Calu3 (cell line): ENCODE measurements at regions of chr2 and their contacts with region 1.

Region 1: DNA sequence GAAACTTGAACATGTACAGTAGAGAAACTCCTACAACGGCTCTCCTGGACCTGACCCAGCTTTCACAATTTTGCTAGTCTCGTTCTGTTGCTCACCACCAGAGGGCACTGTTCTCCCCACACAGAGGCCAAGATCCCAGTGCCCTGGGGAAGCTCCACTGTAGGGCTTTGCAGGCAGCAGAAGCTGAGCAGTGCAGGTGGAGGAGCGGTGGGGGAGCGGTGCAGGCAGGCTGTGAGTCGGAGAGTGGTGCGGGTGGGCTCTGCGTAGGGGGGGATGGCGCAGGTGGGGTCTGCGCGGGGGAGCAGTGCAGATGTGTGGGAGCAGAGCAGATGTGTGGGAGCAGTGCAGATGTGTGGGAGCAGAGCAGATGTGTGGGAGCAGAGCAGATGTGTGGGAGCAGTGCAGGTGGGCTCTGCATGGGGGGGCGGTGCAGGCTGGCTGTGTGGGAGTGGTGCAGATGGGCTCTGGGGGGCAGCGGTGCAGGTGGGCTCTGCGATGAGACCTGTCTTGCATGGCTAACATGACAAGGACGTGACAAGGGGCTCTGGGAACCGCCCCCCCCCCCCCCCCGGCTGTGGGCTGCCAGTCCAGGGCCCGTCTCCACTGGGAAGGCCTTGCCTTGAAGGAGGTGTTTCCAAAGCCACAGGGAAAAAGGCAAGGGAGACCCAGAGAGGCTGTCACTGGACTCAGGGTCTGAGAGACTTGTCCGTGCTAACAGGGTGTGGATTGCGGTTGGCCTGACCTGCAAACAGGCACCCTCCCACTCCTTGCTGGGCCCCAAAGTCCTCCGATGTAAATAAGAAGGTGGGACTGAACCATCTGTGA is 7.3 kb downstream of the CYS1 start:
- DNase-seq: peak; percentile 86
- H3K4me3 Mint-ChIP-seq: no peak overlapping the region
- H3K27ac Mint-ChIP-seq: no peak overlapping the region
- H3K4me1 Mint-ChIP-seq: peaks cover 10% of the 10 kb centered on the region
- H3K27me3 Mint-ChIP-seq: peaks cover 58% of the 10 kb centered on the region
- CTCF ChIP-seq: peak; percentile 77

Region 2: GRCh38 chr2:9820020-9820419 is 252.8 kb before region 1 on chr2:
- CTCF ChIA-PET with region 1: no interaction called
- intact Hi-C with region 1: no loop called
- DNase-seq: peak; percentile 50
- H3K4me3 Mint-ChIP-seq: peak overlapping the region; percentile 54
- H3K27ac Mint-ChIP-seq: peak overlapping the region; percentile 80
- H3K4me1 Mint-ChIP-seq: peaks cover 23% of the 10 kb centered on the region
- H3K27me3 Mint-ChIP-seq: no peaks in the 10 kb centered on the region
- CTCF ChIP-seq: no peak

Region 3: DNA sequence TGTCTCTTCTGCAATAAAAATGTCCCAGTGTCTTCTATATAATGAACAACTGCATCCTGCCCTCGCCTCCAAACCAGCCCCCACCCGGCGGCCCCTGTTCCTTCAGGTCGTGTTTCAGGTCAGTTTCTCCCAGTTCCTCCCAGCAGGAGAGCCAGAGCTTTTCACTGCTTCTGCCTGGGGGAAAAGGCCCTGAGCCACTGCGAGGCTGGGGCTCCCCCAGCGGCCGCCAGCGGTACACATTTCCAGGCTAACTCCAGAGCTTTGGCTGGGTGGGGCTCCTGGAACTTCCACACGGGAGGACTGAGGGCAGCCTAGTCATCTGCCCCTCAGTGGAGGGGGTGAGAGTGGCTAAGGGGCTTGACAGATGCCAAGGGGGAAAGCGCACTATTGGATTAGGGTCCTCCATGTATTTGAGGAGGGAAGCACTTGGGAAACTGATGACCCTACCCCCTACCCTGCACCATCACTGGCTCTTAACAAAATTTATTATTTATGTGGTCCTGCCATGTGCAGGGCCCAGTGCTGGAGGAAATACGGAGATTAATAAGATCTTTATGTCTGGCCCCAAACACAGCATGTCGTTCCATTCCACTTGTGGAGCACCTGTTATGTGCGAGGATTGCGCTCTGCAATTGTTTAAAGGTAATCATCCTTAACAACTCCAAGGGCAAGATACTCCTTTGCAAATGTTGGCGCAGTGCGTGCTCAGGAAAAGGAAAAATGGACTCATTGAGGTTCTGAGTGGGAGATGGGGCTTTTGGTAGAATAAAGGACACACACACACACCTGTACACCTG is 24.7 kb after region 1 on chr2:
- CTCF ChIA-PET with region 1: interaction called, 124 read pairs
- intact Hi-C with region 1: loop called (anchors 1 kb)
- DNase-seq: peak; percentile 80
- H3K4me3 Mint-ChIP-seq: no peak overlapping the region
- H3K27ac Mint-ChIP-seq: no peak overlapping the region
- H3K4me1 Mint-ChIP-seq: peaks cover 11% of the 10 kb centered on the region
- H3K27me3 Mint-ChIP-seq: no peaks in the 10 kb centered on the region
- CTCF ChIP-seq: peak; percentile 85

Region 4: DNA sequence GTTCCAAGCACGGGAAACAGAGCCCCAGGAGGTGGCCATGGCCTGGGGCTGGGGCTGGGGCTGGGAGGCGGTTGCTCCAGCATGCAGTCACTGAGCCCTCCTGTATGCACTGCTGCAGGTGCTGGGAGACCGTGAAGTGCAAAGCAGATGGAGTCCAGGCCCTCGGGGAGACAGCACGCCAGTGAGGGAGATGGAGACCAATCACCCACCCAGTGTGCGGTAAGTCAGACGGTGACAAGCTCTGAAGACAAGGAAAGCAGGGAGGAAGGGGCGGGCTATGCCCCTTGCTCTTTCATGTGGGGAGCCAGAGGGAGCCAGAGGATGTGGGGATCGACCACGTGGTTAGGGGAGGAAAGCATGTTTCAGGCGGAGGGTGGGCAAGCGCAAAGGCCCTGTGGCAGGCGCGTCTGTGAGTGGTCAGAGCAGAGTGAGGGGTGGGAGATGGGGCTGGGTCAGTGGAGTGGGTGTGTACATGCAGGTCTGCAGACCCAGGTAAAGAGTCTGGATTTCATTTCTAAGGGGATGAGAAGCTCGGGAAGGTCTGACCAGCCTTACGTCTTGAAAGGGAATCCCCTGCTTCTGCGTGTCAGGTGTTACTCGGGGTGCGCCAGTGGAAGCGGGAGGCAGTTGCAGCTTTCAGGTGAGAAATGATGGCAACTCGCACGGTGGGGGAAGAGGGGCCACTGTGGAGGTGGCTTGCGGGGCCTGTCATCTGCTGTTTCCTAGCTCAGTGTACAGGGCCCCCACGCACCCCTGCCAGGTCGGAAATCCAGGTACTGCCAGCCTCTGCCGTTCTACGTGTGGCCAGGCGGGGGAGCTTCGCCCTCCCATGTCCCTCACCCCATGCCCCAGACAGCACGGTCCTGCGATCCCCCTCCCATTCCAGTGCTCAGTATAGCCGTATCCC is 69.1 kb after region 1 on chr2:
- CTCF ChIA-PET with region 1: interaction called, 10 read pairs
- intact Hi-C with region 1: no loop called
- DNase-seq: peak; percentile 47
- H3K4me3 Mint-ChIP-seq: no peak overlapping the region
- H3K27ac Mint-ChIP-seq: peak overlapping the region; percentile 73
- H3K4me1 Mint-ChIP-seq: peaks cover 9% of the 10 kb centered on the region
- H3K27me3 Mint-ChIP-seq: no peaks in the 10 kb centered on the region
- CTCF ChIP-seq: peak; percentile 55

Region 5: GRCh38 chr2:10434886-10435819 is 362.3 kb after region 1 on chr2:
- CTCF ChIA-PET with region 1: interaction called, 44 read pairs
- intact Hi-C with region 1: loop called (anchors 2 kb)
- DNase-seq: peak; percentile 86
- H3K4me3 Mint-ChIP-seq: no peak overlapping the region
- H3K27ac Mint-ChIP-seq: no peak overlapping the region
- H3K4me1 Mint-ChIP-seq: peaks cover 18% of the 10 kb centered on the region
- H3K27me3 Mint-ChIP-seq: no peaks in the 10 kb centered on the region
- CTCF ChIP-seq: peak; percentile 95

Region 6: DNA sequence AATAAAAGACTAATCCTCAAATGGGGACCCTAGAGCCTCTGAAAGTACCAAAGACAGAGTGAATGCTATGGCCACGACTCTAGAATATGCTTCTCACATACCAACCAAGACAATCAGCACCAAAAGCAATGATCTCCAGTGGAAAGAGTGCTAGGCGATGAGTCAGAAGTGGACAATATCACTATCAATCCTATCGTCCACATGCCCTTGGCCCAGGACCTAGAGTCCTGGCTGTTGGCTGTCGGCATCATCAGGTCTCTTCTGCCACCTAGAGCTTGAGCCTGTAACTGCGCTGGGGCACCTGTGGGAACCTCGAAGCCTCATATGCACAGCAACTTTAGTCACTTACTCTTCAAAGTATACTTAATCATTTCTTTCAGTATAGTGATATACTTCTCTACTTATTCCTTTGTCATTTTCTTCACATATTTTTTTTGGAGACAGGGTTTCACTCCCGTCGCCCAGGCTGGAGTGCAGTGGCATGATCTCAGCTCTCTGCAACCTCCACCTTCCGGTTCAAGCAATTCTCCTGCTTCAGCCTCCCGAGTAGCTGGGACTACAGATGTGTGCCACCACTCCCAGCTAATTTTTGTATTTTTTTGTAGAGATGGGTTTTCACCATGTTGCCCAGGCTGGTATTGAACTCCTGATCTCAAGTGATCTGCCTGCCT is 587.2 kb after region 1 on chr2:
- CTCF ChIA-PET with region 1: interaction called, 3 read pairs
- intact Hi-C with region 1: loop called (anchors 10 kb)
- DNase-seq: peak; percentile 64
- H3K4me3 Mint-ChIP-seq: no peak overlapping the region
- H3K27ac Mint-ChIP-seq: no peak overlapping the region
- H3K4me1 Mint-ChIP-seq: peaks cover 8% of the 10 kb centered on the region
- H3K27me3 Mint-ChIP-seq: no peaks in the 10 kb centered on the region
- CTCF ChIP-seq: peak; percentile 78